HCT116 (cell line): ENCODE measurements at regions of chr4 and their contacts with region 1.

Region 1: GRCh38 chr4:119314356-119314755 is 7.6 kb downstream of the FABP2 start:
- DNase-seq: no peak
- ATAC-seq: peak; percentile 75
- H3K4me3 ChIP-seq: no peak overlapping the region
- H3K27ac ChIP-seq: no peak overlapping the region
- H3K4me1 ChIP-seq: no peaks in the 10 kb centered on the region
- H3K27me3 ChIP-seq: no peaks in the 10 kb centered on the region
- CTCF ChIP-seq: peak; percentile 29 to 47 (median 42); a peak in 4 of 6 replicates
- POLR2A ChIP-seq: no peak
- RAD21 ChIP-seq: peak; percentile 70

Region 2: GRCh38 chr4:118760493-118760892 is 553.9 kb before region 1 on chr4:
- CTCF ChIA-PET with region 1: no interaction called
- POLR2A ChIA-PET with region 1: no interaction called
- RAD21 ChIA-PET with region 1: no interaction called
- intact Hi-C with region 1: no loop called
- DNase-seq: no peak
- ATAC-seq: no peak
- H3K4me3 ChIP-seq: no peak overlapping the region
- H3K27ac ChIP-seq: no peak overlapping the region
- H3K4me1 ChIP-seq: peaks cover 0 to 5% of the 10 kb centered on the region in 2 experiments; a peak in 2 of 4 replicates
- H3K27me3 ChIP-seq: no peaks in the 10 kb centered on the region
- CTCF ChIP-seq: no peak
- POLR2A ChIP-seq: no peak
- RAD21 ChIP-seq: no peak

Region 3: GRCh38 chr4:119785963-119786362 is 471.6 kb after region 1 on chr4:
- CTCF ChIA-PET with region 1: no interaction called
- POLR2A ChIA-PET with region 1: no interaction called
- RAD21 ChIA-PET with region 1: no interaction called
- intact Hi-C with region 1: loop called (anchors 5 kb)
- DNase-seq: peak; percentile 13
- ATAC-seq: no peak
- H3K4me3 ChIP-seq: no peak overlapping the region
- H3K27ac ChIP-seq: no peak overlapping the region
- H3K4me1 ChIP-seq: no peaks in the 10 kb centered on the region
- H3K27me3 ChIP-seq: no peaks in the 10 kb centered on the region
- CTCF ChIP-seq: peak; percentile 38 to 55 (median 55); a peak in 5 of 6 replicates
- POLR2A ChIP-seq: no peak
- RAD21 ChIP-seq: peak; percentile 72

Region 4: GRCh38 chr4:120049732-120050494 is 735.6 kb after region 1 on chr4:
- CTCF ChIA-PET with region 1: no interaction called
- POLR2A ChIA-PET with region 1: no interaction called
- RAD21 ChIA-PET with region 1: no interaction called
- intact Hi-C with region 1: loop called (anchors 1 kb)
- DNase-seq: peak; percentile 52
- ATAC-seq: peak; percentile 98
- H3K4me3 ChIP-seq: no peak overlapping the region
- H3K27ac ChIP-seq: no peak overlapping the region
- H3K4me1 ChIP-seq: peaks cover 0 to 4% of the 10 kb centered on the region in 2 experiments; a peak in 2 of 4 replicates
- H3K27me3 ChIP-seq: no peaks in the 10 kb centered on the region
- CTCF ChIP-seq: peak; percentile 65 to 77 (median 76)
- POLR2A ChIP-seq: no peak
- RAD21 ChIP-seq: peak; percentile 91